ENCODE measurements at regions of chr19 and their contacts with region 1.

Region 1: GRCh38 chr19:10380313-10381102 is at the start of gene TYK2:
- DNase-seq: peak; percentile 98 to 99
- ATAC-seq: peak; percentile 90 to 97 (median 92)
- H3K4me3 ChIP-seq: peak within 1 kb of the TSS; percentile 92
- H3K4me3 Mint-ChIP-seq: peak within 1 kb of the TSS; percentile 94
- H3K27ac ChIP-seq: peak within 1 kb of the TSS; percentile 93
- H3K27ac Mint-ChIP-seq: peak within 1 kb of the TSS; percentile 97
- H3K4me1 ChIP-seq: peaks cover 20% of the 10 kb centered on the region
- H3K4me1 Mint-ChIP-seq: peaks cover 19 to 26% of the 10 kb centered on the region in 2 donors
- H3K27me3 ChIP-seq: no peaks in the 10 kb centered on the region
- H3K27me3 Mint-ChIP-seq: no peaks in the 10 kb centered on the region
- CTCF ChIP-seq: no peak
- total RNA-seq, gene TYK2: 401 to 469 (median 454) TPM

Region 2: GRCh38 chr19:10332955-10333757 is 47.4 kb before region 1 on chr19 and contains the start of gene RAVER1:
- intact Hi-C with region 1: loop called (anchors 1 kb)
- DNase-seq: peak; percentile 96 to 99
- ATAC-seq: peak; percentile 94 to 99 (median 94)
- H3K4me3 ChIP-seq: peak within 1 kb of the TSS; percentile 99
- H3K4me3 Mint-ChIP-seq: peak within 1 kb of the TSS; percentile 96
- H3K27ac ChIP-seq: peak within 1 kb of the TSS; percentile 97
- H3K27ac Mint-ChIP-seq: peak within 1 kb of the TSS; percentile 90 to 96
- H3K4me1 ChIP-seq: peaks cover 30% of the 10 kb centered on the region
- H3K4me1 Mint-ChIP-seq: peaks cover under 1 to 21% of the 10 kb centered on the region in 2 donors
- H3K27me3 ChIP-seq: no peaks in the 10 kb centered on the region
- H3K27me3 Mint-ChIP-seq: no peaks in the 10 kb centered on the region
- CTCF ChIP-seq: no peak
- total RNA-seq, gene RAVER1: 42.5 to 64.3 (median 55.9) TPM

Region 3: GRCh38 chr19:10353793-10354391 is 26.6 kb before region 1 on chr19:
- intact Hi-C with region 1: no loop called
- DNase-seq: peak in 1 of 2 donors; percentile 56
- ATAC-seq: peak in 2 of 3 donors; percentile 24 to 65
- H3K4me3 ChIP-seq: no peak overlapping the region
- H3K4me3 Mint-ChIP-seq: no peak overlapping the region
- H3K27ac ChIP-seq: no peak overlapping the region
- H3K27ac Mint-ChIP-seq: no peak overlapping the region
- H3K4me1 ChIP-seq: no peaks in the 10 kb centered on the region
- H3K4me1 Mint-ChIP-seq: no peaks in the 10 kb centered on the region
- H3K27me3 ChIP-seq: no peaks in the 10 kb centered on the region
- H3K27me3 Mint-ChIP-seq: no peaks in the 10 kb centered on the region
- CTCF ChIP-seq: no peak

Region 4: DNA sequence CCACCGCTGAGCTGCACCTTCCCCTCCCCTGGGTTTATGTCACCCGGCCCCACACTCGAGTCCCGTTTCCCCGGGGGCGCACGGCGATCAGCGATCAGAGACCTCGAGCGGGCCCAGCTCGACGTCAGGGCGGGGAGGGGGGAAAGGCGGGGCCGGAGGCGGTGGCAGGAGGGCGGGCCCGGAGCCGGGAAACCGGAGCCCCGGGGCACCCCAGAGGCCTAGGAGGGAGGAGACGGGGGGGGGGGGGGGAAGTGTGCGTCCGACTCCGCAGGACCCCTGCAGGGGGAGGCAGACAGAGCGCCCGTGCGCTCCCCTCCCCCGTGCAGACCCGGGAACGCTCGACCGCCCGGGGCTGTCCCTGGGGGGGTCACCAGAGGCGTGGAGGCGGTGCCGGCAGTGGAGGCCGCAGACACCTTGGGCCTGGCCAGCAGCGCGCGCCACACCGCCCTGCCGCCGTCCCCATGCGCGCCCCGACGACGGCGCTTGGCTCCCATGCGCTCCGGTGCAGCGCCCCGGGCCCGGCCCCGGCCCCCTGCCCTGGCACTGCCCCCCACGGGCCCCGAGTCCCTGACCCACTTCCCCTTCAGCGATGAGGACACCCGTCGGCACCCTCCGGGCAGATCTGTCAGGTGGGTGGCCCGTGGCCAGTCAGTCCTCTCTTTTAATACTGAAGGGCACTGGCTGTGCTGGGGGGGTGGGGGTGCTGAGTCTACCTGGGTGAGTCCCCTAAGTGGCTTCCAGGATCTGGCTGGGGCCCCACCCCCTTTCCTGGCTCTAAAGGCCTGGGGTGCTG is 51.6 kb after region 1 on chr19:
- intact Hi-C with region 1: loop called (anchors 10 kb)
- DNase-seq: peak; percentile 73 to 85
- ATAC-seq: peak; percentile 32 to 49 (median 47)
- H3K4me3 ChIP-seq: peak overlapping the region; percentile 52
- H3K4me3 Mint-ChIP-seq: peak overlapping the region; percentile 95
- H3K27ac ChIP-seq: peak overlapping the region; percentile 94
- H3K27ac Mint-ChIP-seq: peak overlapping the region; percentile 95 to 96
- H3K4me1 ChIP-seq: peaks cover 56% of the 10 kb centered on the region
- H3K4me1 Mint-ChIP-seq: peaks cover 55 to 66% of the 10 kb centered on the region in 2 donors
- H3K27me3 ChIP-seq: no peaks in the 10 kb centered on the region
- H3K27me3 Mint-ChIP-seq: peaks cover 3 to 7% of the 10 kb centered on the region in 2 donors
- CTCF ChIP-seq: no peak

Region 5: DNA sequence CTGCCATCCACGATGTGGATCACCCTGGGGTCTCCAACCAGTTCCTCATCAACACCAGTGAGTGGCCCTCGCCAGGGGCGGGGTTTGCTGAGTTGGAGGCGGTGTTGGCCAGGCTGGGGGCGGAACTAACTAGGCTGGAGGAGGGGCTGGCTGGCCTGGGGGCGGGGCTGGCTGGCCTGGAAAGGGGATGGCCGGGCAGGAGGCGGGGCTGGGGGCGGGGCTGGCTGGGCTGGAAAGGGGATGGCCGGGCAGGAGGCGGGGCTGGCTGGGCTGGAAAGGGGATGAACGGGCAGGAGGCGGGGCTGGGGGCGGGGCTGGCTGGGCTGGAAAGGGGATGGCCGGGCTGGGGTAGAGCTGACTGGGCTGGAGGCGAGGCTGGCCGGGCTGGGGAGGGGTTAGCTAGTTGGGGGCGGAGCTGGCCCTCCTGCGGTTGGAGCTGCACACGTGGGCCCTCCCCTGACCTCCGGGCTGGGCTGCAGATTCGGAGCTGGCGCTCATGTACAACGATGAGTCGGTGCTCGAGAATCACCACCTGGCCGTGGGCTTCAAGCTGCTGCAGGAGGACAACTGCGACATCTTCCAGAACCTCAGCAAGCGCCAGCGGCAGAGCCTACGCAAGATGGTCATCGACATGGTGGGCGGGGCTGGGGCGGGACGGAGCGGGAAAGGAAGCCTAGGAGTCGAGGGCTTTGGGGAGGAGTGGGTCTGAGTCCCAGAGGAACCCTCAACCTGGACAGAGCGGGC is 80.7 kb after region 1 on chr19:
- intact Hi-C with region 1: no loop called
- DNase-seq: peak; percentile 89 to 90
- ATAC-seq: peak; percentile 91 to 95 (median 92)
- H3K4me3 ChIP-seq: peak overlapping the region; percentile 25
- H3K4me3 Mint-ChIP-seq: peak overlapping the region; percentile 40
- H3K27ac ChIP-seq: no peak overlapping the region
- H3K27ac Mint-ChIP-seq: peak overlapping the region; percentile 58 to 78
- H3K4me1 ChIP-seq: peaks cover 13% of the 10 kb centered on the region
- H3K4me1 Mint-ChIP-seq: no peaks in the 10 kb centered on the region
- H3K27me3 ChIP-seq: no peaks in the 10 kb centered on the region
- H3K27me3 Mint-ChIP-seq: no peaks in the 10 kb centered on the region
- CTCF ChIP-seq: no peak